Activated CD4-positive, alpha-beta T cell treated with anti-CD3 and anti-CD28 coated beads, Interleukin-2, amount 10 ng/mL, durations not matched to agents 7 days and 5 days (primary cell): ENCODE measurements at regions of chr2 and their contacts with region 1.

Region 1: GRCh38 chr2:219509780-219510511 is 4.3 kb upstream of the ASIC4 start:
- DNase-seq: peak; percentile 55
- H3K4me3 Mint-ChIP-seq: no peak overlapping the region
- H3K27ac Mint-ChIP-seq: no peak overlapping the region
- H3K4me1 Mint-ChIP-seq: peaks cover 11% of the 10 kb centered on the region
- H3K27me3 Mint-ChIP-seq: peaks cover 51% of the 10 kb centered on the region

Region 2: DNA sequence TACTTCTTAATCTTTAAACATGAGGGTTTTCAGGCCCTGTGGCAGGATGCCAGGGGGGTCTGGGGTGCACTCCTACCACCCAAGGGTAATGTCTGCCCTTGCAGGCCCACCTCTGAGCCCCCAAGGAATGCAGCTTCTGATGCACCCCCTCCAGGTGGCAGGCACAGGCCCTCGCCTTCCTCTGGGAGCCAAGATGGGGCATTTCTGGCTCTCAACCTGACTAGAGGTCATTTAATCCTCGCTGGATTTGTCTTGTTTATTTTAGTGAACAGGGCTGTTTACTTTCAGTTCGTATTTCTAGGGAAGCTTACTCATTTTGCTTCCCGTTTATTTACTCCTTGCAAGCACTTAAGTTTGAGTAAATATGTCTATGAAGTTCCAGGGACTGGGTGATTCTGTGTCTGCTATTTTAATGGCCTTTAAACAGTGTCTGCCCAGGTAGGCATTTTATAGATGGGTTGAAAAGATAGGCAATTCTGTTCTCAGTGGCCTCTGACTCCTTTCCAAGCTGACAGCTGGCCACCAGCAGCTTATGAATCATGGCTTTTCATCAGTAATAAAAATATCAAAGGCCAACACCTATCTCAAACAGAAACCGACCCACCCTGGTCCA is 111.1 kb before region 1 on chr2:
- CTCF ChIA-PET with region 1: no interaction called
- POLR2A ChIA-PET with region 1: no interaction called
- DNase-seq: no peak
- H3K4me3 Mint-ChIP-seq: no peak overlapping the region
- H3K27ac Mint-ChIP-seq: no peak overlapping the region
- H3K4me1 Mint-ChIP-seq: peaks cover 9% of the 10 kb centered on the region
- H3K27me3 Mint-ChIP-seq: peaks cover 3% of the 10 kb centered on the region

Region 3: DNA sequence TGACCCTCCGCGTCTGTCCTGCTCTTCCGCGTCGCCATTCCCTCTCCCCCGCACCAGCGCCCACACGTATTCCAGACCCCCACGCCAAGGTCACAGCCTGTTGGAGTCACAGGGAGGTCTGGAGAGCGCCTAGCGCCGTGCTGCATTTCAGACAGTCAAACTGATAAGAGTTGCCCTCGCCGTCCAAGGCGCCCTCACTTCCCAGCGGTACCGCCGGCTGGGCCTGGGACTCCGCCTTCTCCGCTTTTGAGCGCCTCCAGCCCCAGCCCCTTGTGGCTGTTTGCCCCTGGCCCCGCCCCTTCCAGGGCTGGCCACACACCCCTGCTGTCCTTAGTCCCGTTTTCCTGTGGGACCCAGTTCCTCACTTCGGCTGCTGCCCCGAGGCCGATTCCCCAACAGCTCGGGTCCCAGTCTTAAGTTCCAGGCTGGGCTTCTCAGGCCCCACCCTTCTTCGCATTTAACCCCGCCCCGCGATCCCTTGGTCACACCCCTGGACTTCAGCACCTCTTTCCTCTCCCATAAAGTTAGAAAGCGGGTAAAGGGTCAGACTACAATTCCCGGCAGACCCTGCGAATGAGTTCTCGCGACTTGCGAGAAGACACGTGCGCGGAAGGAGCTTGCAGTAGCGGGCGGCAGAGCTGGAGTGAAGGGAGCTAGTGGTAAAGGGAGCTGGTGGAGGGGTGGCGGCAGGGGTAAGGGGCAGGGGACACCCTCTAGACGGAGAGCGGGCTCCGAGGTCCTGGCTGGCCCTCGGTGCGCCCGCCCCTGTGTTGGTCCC is 11.5 kb before region 1 on chr2 and contains the start of gene GMPPA:
- CTCF ChIA-PET with region 1: interaction called, 58 read pairs
- POLR2A ChIA-PET with region 1: no interaction called
- DNase-seq: peak; percentile 97
- H3K4me3 Mint-ChIP-seq: peak within 1 kb of the TSS; percentile 85
- H3K27ac Mint-ChIP-seq: peak within 1 kb of the TSS; percentile 85
- H3K4me1 Mint-ChIP-seq: peaks cover 35% of the 10 kb centered on the region
- H3K27me3 Mint-ChIP-seq: peaks cover 40% of the 10 kb centered on the region
- total RNA-seq, gene GMPPA: 34.5 to 40.5 TPM

Region 4: GRCh38 chr2:219627103-219628100 is 117.5 kb after region 1 on chr2 and contains the start of gene SLC4A3:
- CTCF ChIA-PET with region 1: no interaction called
- POLR2A ChIA-PET with region 1: no interaction called
- DNase-seq: no peak
- H3K4me3 Mint-ChIP-seq: peak within 1 kb of the TSS; percentile 62
- H3K27ac Mint-ChIP-seq: no peak within 1 kb of the TSS
- H3K4me1 Mint-ChIP-seq: peaks cover 6% of the 10 kb centered on the region
- H3K27me3 Mint-ChIP-seq: peaks cover 30% of the 10 kb centered on the region
- total RNA-seq, gene SLC4A3: not detected